Dorsolateral prefrontal cortex (tissue), 120 donors: ENCODE measurements at regions of chr1 and their contacts with region 1.

Region 1: GRCh38 chr1:26705788-26706311 is 10.0 kb downstream of the ARID1A start:
- DNase-seq: no peak
- H3K4me3 ChIP-seq: peak overlapping the region in 8 of 59 donors; percentile 2 to 44 (median 8)
- H3K27ac ChIP-seq: peak overlapping the region in 37 of 59 donors; percentile 0 to 58 (median 36)
- H3K27me3 ChIP-seq: no peaks in the 10 kb centered on the region
- CTCF ChIP-seq: no peak

Region 2: GRCh38 chr1:26542771-26543451 is 162.9 kb before region 1 on chr1:
- intact Hi-C with region 1: no loop called
- DNase-seq: no peak
- H3K4me3 ChIP-seq: peak overlapping the region in 42 of 59 donors; percentile 4 to 54 (median 34)
- H3K27ac ChIP-seq: peak overlapping the region in 58 of 59 donors; percentile 62 to 95 (median 88)
- H3K27me3 ChIP-seq: no peaks in the 10 kb centered on the region
- CTCF ChIP-seq: no peak

Region 3: DNA sequence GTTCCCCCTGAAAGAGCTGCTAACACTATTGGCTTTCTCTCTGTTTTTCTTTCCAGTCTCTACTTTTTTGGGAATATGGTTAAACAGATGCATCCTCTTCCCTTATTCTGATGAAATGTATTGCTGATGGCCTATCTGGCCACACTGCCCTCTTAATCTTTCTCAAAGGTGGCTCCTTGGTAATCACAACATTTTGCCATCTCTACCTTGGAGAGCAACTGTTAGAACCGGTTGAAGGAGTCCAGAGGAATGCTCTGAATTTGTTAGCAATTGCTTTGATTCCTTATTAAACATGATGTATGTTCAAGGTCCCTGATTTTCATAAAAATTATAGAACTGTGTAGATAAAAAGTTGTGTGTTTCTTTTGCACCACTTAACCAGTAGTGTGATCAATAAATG is 60.1 kb before region 1 on chr1:
- intact Hi-C with region 1: no loop called
- DNase-seq: no peak
- H3K4me3 ChIP-seq: no peak overlapping the region
- H3K27ac ChIP-seq: no peak overlapping the region
- H3K27me3 ChIP-seq: no peaks in the 10 kb centered on the region
- CTCF ChIP-seq: no peak

Region 4: DNA sequence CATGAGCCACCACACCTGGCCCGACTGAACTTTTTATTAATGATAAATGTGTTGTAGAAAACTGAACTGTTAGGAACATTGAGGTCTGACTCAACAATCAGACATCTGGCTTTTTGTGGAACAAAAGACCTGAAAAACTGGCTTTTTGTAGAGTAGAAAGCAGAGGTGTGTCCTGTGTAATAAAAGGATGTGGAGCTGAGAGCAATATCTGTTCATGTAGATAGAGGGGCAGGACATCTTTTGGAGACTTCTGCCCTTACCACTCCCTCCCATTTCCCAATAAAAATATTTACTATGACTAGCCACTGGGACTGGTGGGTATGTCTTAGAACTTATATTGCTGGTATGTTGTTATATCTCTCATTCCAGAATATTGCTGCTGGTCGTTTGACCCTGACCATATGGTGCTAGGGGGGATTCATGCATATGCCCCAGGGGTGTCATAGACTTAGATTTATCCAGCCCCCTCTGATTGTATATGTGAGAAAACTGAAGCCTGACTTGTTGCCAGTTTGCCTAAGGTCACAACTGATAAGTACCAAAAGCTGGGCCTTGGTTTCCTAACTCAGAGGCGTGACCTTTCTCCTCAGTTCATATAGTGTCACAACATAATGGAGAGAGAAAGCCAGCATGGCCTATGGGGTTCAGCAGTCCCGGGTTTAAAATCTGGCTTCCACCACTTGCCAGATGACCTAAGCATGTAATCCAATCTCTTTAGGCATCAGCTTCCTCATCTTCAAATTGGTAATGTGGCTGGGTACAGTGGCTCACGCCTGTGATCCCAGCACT is 48.4 kb after region 1 on chr1:
- intact Hi-C with region 1: loop called in 1 of 2 experiments (anchors 5 kb)
- DNase-seq: no peak
- H3K4me3 ChIP-seq: no peak overlapping the region
- H3K27ac ChIP-seq: peak overlapping the region in 10 of 59 donors; percentile 15 to 54 (median 42)
- H3K27me3 ChIP-seq: no peaks in the 10 kb centered on the region
- CTCF ChIP-seq: no peak